Right ventricle myocardium inferior (tissue), 1 donor: ENCODE measurements at regions of chr14 and their contacts with region 1.

Region 1: DNA sequence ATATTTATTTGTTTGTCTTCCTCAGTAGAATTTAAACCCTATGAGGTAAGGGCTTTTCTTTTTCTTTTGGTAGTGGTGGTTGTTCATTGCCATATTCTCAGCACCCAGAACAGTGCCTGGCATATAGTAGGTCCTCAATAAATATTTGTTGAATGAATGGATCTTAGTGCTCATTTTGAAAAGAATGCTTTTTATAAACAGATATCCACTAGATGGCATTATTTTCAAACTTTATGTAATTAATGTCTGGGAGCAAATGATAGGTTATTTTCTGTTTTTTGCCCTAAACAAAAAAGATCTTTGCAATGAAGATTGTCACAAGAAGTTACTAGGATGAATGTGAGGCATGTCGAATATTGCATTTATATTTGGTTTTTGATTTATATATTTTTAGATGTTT is 64.1 kb downstream of the RAD51B start:
- DNase-seq: no peak
- ATAC-seq: no peak

Region 2: DNA sequence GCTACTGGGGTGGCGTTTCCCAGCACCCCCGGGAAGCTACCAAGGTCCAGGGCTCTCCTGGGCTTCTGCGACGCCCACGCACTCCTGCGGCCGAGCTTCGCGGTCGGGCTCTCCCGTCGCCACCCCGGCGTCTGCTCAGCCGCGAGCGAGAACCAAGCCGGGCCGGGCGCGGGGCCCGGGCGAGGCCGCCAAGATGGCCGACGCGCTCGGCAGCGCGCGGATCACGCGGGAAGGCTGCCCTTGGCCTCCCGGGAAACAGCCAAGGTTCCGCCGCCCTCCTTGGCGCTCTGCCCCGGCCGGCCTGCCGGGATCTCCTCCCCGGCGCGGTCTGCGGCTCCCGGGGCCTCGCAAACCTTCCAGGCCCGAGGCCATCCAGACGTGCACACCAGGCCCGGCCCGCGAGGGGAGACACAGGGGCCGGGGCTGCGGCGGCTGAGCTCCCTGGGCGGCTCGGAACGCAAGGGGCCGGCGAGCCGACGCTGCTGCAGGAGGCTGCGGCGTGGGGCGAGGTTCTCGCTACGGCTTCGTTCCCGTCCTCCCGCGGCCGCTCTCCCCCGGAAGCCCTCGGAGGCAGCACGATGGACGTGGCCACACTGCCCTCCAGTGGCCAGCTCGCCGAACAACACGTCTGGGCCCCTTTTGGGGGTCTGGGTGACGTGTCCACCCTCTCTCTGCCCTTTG is 932.7 kb after region 1 on chr14:
- intact Hi-C with region 1: loop called (anchors 5 kb)
- DNase-seq: peak; percentile 96
- ATAC-seq: peak; percentile 94

Region 3: GRCh38 chr14:68843471-68844209 is 959.9 kb after region 1 on chr14:
- intact Hi-C with region 1: loop called (anchors 5 kb)
- DNase-seq: peak; percentile 87
- ATAC-seq: peak; percentile 83